PC-3 (cell line): ENCODE measurements at regions of chr2 and their contacts with region 1.

Region 1: GRCh38 chr2:142682528-142682927 is 194.9 kb upstream of the KYNU start:
- DNase-seq: peak; percentile 42
- ATAC-seq: no peak; the same call in 1 of the 2 replicates
- H3K4me3 ChIP-seq: no peak overlapping the region
- H3K27ac ChIP-seq: no peak overlapping the region
- H3K4me1 ChIP-seq: no peaks in the 10 kb centered on the region
- H3K27me3 ChIP-seq: no peaks in the 10 kb centered on the region
- CTCF ChIP-seq: peak; percentile 66

Region 2: GRCh38 chr2:142980561-142981378 is 298.2 kb after region 1 on chr2:
- CTCF ChIA-PET with region 1: no interaction called
- POLR2A ChIA-PET with region 1: no interaction called
- intact Hi-C with region 1: loop called (anchors 1 kb)
- DNase-seq: peak; percentile 77
- ATAC-seq: peak; percentile 83
- H3K4me3 ChIP-seq: no peak overlapping the region
- H3K27ac ChIP-seq: peak overlapping the region; percentile 59
- H3K4me1 ChIP-seq: peaks cover 11% of the 10 kb centered on the region
- H3K27me3 ChIP-seq: no peaks in the 10 kb centered on the region
- CTCF ChIP-seq: peak; percentile 67

Region 3: GRCh38 chr2:142989273-142990204 is 307.0 kb after region 1 on chr2:
- CTCF ChIA-PET with region 1: no interaction called
- POLR2A ChIA-PET with region 1: no interaction called
- intact Hi-C with region 1: loop called (anchors 1 kb)
- DNase-seq: peak; percentile 61
- ATAC-seq: peak; percentile 55
- H3K4me3 ChIP-seq: no peak overlapping the region
- H3K27ac ChIP-seq: no peak overlapping the region
- H3K4me1 ChIP-seq: no peaks in the 10 kb centered on the region
- H3K27me3 ChIP-seq: no peaks in the 10 kb centered on the region
- CTCF ChIP-seq: peak; percentile 71